Heart right ventricle (tissue), 16 donors: ENCODE measurements at regions of chr9 and their contacts with region 1.

Region 1: GRCh38 chr9:7147121-7148090 is 389.6 kb downstream of the KDM4C start:
- DNase-seq: peak; percentile 67 to 72
- ATAC-seq: peak; percentile 75 to 94 (median 88)
- H3K4me3 ChIP-seq: peak overlapping the region in 1 of 10 donors; percentile 13
- H3K27ac ChIP-seq: peak overlapping the region; percentile 64 to 90 (median 82)
- H3K4me1 ChIP-seq: peaks cover 0 to 69% (median 34%) of the 10 kb centered on the region in 9 donors
- H3K27me3 ChIP-seq: no peaks in the 10 kb centered on the region
- CTCF ChIP-seq: peak in 3 of 9 donors; percentile 27 to 38 (median 28)

Region 2: GRCh38 chr9:7055201-7055903 is 92.1 kb before region 1 on chr9:
- intact Hi-C with region 1: loop called in 1 of 10 experiments (anchors 10 kb)
- DNase-seq: no peak
- ATAC-seq: no peak
- H3K4me3 ChIP-seq: no peak overlapping the region
- H3K27ac ChIP-seq: no peak overlapping the region
- H3K4me1 ChIP-seq: peaks cover 0 to 9% (median 0%) of the 10 kb centered on the region in 9 donors
- H3K27me3 ChIP-seq: no peaks in the 10 kb centered on the region
- CTCF ChIP-seq: no peak